CD8-positive, alpha-beta T cell (primary cell): ENCODE measurements at regions of chr22 and their contacts with region 1.

Region 1: DNA sequence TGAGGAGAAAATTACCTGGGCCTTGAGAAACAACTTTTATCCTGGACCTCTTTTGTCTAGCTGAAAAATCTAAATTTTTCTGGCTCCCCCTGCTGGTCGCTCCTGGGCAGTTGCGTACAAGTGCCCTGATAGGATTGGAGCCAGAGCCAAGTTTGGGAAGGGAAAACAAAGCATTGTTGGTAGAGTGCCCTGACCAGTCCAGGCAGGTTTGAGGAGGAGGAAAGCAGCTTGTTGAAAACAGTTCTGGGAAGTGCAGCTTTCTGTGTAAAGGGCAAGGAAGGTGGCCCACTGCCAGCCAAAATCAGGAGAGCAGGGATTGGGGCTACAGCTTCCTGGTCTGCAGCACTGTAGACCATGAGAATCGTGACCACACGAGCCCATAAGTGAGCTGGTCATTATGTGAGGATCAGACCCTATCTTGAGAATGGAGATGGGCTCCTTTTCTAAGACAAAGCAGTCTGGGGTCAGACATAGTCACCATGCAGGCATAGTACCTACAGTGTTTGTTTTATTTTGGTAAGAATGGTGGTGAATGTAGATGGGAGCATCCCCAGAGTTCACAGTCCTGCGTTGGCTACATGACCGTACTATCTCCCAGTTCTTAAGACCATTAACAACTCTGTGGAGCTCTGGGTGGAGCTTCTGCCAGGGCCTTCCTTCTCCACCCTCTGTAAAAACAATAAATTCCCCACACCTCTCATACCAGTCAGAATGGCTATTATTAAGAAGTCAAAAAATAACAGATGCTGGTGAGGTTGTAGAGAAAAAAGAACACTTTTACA is 21.3 kb upstream of the PIK3IP1 start:
- DNase-seq: peak; percentile 37 to 82 (median 68)
- ATAC-seq: peak; percentile 84
- H3K4me3 ChIP-seq: no peak overlapping the region
- H3K4me3 Mint-ChIP-seq: no peak overlapping the region
- H3K27ac ChIP-seq: no peak overlapping the region
- H3K27ac Mint-ChIP-seq: no peak overlapping the region
- H3K4me1 ChIP-seq: peaks cover 13% of the 10 kb centered on the region
- H3K4me1 Mint-ChIP-seq: peaks cover 9% of the 10 kb centered on the region
- H3K27me3 ChIP-seq: no peaks in the 10 kb centered on the region
- H3K27me3 Mint-ChIP-seq: no peaks in the 10 kb centered on the region
- CTCF ChIP-seq: peak; percentile 82

Region 2: DNA sequence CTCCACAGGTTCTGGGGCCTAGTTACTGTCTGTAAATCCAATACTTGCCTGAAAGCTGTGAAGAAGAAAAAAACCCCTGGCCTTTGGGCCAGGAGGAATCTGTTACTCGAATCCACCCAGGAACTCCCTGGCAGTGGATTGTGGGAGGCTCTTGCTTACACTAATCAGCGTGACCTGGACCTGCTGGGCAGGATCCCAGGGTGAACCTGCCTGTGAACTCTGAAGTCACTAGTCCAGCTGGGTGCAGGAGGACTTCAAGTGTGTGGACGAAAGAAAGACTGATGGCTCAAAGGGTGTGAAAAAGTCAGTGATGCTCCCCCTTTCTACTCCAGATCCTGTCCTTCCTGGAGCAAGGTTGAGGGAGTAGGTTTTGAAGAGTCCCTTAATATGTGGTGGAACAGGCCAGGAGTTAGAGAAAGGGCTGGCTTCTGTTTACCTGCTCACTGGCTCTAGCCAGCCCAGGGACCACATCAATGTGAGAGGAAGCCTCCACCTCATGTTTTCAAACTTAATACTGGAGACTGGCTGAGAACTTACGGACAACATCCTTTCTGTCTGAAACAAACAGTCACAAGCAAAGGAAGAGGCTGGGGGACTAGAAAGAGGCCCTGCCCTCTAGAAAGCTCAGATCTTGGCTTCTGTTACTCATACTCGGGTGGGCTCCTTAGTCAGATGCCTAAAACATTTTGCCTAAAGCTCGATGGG is 34.8 kb before region 1 on chr22:
- CTCF ChIA-PET with region 1: interaction called, 29 read pairs
- POLR2A ChIA-PET with region 1: interaction called, 8 read pairs
- intact Hi-C with region 1: loop called (anchors 2 to 5 kb)
- DNase-seq: peak in 8 of 9 experiments; percentile 30 to 78 (median 64)
- ATAC-seq: peak; percentile 73
- H3K4me3 ChIP-seq: no peak overlapping the region
- H3K4me3 Mint-ChIP-seq: peak overlapping the region; percentile 73
- H3K27ac ChIP-seq: peak overlapping the region; percentile 54 to 76
- H3K27ac Mint-ChIP-seq: peak overlapping the region; percentile 94
- H3K4me1 ChIP-seq: peaks cover 93% of the 10 kb centered on the region
- H3K4me1 Mint-ChIP-seq: peaks cover 89% of the 10 kb centered on the region
- H3K27me3 ChIP-seq: no peaks in the 10 kb centered on the region
- H3K27me3 Mint-ChIP-seq: no peaks in the 10 kb centered on the region
- CTCF ChIP-seq: no peak

Region 3: GRCh38 chr22:31302006-31302405 is 11.6 kb before region 1 on chr22:
- CTCF ChIA-PET with region 1: interaction called, 47 read pairs
- POLR2A ChIA-PET with region 1: interaction called, 5 read pairs
- intact Hi-C with region 1: no loop called
- DNase-seq: no peak
- ATAC-seq: no peak
- H3K4me3 ChIP-seq: no peak overlapping the region
- H3K4me3 Mint-ChIP-seq: no peak overlapping the region
- H3K27ac ChIP-seq: no peak overlapping the region
- H3K27ac Mint-ChIP-seq: no peak overlapping the region
- H3K4me1 ChIP-seq: peaks cover 22% of the 10 kb centered on the region
- H3K4me1 Mint-ChIP-seq: peaks cover 43% of the 10 kb centered on the region
- H3K27me3 ChIP-seq: no peaks in the 10 kb centered on the region
- H3K27me3 Mint-ChIP-seq: no peaks in the 10 kb centered on the region
- CTCF ChIP-seq: no peak

Region 4: DNA sequence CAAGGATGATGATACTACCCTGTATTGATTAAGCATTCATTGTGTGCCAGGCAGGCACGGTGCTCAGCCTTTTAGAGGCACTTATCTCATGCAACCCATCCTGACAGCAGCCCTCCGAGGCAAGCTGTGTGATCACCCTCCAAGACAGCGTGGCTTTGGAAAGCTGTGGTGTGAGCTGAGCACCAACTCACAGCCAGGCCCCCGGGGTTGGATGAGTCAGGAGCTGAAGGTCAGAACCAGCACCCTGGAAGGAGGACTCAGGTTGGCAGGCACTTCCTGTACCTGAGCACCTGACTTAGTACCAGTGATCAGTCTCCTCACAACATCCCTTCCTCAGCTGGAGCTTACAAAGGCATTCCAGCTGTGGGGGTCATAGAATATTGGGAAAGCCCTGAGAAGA is 23.6 kb after region 1 on chr22:
- CTCF ChIA-PET with region 1: interaction called, 26 read pairs
- POLR2A ChIA-PET with region 1: interaction called, 3 read pairs
- intact Hi-C with region 1: no loop called
- DNase-seq: peak in 1 of 9 experiments; percentile 25
- ATAC-seq: peak; percentile 14
- H3K4me3 ChIP-seq: no peak overlapping the region
- H3K4me3 Mint-ChIP-seq: no peak overlapping the region
- H3K27ac ChIP-seq: no peak overlapping the region
- H3K27ac Mint-ChIP-seq: peak overlapping the region; percentile 57
- H3K4me1 ChIP-seq: peaks cover 50% of the 10 kb centered on the region
- H3K4me1 Mint-ChIP-seq: peaks cover 84% of the 10 kb centered on the region
- H3K27me3 ChIP-seq: no peaks in the 10 kb centered on the region
- H3K27me3 Mint-ChIP-seq: no peaks in the 10 kb centered on the region
- CTCF ChIP-seq: no peak

Region 5: GRCh38 chr22:31425331-31426050 is 111.9 kb after region 1 on chr22:
- CTCF ChIA-PET with region 1: no interaction called
- POLR2A ChIA-PET with region 1: no interaction called
- intact Hi-C with region 1: no loop called
- DNase-seq: no peak
- ATAC-seq: no peak
- H3K4me3 ChIP-seq: no peak overlapping the region
- H3K4me3 Mint-ChIP-seq: no peak overlapping the region
- H3K27ac ChIP-seq: no peak overlapping the region
- H3K27ac Mint-ChIP-seq: no peak overlapping the region
- H3K4me1 ChIP-seq: no peaks in the 10 kb centered on the region
- H3K4me1 Mint-ChIP-seq: no peaks in the 10 kb centered on the region
- H3K27me3 ChIP-seq: no peaks in the 10 kb centered on the region
- H3K27me3 Mint-ChIP-seq: no peaks in the 10 kb centered on the region
- CTCF ChIP-seq: no peak